Mammary epithelial cell (primary cell): ENCODE measurements at regions of chr1 and their contacts with region 1.

Region 1: DNA sequence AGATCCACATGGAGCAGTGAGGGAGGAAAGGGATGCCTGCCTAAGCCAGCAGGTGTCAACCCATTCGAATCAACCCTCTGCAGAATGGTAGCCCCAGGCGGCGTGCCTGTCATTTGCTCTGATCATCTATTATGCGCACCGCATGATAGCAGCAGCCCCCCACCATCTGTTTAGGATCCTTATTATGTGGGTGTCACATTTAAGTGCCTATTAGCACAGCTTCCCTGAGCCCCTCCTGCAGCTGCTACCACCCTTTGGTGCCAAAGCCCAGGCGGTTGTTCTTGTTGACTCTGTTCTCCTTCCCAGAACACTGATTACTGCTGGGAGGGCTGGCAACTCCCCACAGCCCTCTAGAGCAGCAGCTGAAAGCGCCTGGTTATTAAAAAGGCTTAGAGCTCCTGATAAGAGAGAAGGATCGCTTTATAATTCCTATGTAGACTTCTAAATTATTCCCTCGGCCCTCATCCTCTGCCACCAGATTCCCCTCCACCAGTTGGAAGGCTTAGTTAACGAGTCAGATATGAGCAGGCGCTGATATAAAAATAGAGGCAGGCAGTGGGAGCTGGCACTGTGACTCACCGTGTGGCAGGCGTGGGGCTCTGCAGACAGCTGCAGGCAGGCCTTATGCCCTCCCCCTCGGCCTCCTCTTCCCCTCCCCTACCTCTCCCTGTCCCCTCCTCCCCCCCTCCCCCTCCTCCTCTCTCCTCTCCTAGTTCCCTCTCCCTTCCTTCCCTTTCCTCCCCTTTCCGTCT is 23.0 kb downstream of the ACTA1 start:
- DNase-seq: peak; percentile 43
- H3K4me3 ChIP-seq: no peak overlapping the region
- H3K27ac ChIP-seq: no peak overlapping the region
- H3K4me1 ChIP-seq: peaks cover 14% of the 10 kb centered on the region
- H3K27me3 ChIP-seq: peaks cover 7% of the 10 kb centered on the region
- CTCF ChIP-seq: no peak

Region 2: GRCh38 chr1:228921481-228921880 is 489.4 kb before region 1 on chr1:
- CTCF ChIA-PET with region 1: no interaction called
- dilution Hi-C with region 1: no loop called
- in situ Hi-C with region 1: no loop called
- intact Hi-C with region 1: no loop called
- DNase-seq: no peak
- H3K4me3 ChIP-seq: no peak overlapping the region
- H3K27ac ChIP-seq: no peak overlapping the region
- H3K4me1 ChIP-seq: no peaks in the 10 kb centered on the region
- H3K27me3 ChIP-seq: no peaks in the 10 kb centered on the region
- CTCF ChIP-seq: no peak

Region 3: DNA sequence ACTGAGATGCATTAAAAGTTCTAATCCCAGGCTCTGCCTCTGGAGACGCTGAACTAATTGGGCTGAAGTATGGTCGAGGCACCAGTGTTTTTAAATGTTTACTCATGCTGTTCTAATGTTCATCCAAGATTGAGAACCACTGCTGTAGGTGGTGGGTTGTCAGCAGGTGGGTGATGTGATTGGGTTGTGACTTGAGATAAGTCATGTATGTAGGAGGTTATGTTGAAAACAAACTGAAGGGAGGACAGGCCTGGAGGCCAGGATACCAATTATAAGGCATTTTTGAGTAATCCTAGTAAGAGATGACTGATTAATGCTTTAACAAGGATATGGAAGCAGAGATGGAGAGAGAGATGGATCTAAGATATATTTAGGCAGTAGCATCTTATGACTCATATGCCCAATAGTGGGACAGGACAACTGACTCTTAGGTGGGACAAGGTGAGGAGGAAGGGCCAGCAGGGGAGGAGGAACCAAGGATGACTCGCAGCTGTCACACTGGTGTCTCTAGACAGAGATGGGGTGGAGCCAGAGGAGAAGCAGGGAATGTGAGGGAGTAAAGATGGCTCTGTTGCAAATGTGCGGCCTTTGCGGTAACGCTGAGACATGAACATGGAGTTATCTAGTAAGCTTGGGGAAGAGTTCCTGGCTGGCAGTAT is 110.6 kb before region 1 on chr1:
- CTCF ChIA-PET with region 1: no interaction called
- dilution Hi-C with region 1: loop called (anchors 5 kb)
- in situ Hi-C with region 1: no loop called
- intact Hi-C with region 1: no loop called
- DNase-seq: no peak
- H3K4me3 ChIP-seq: no peak overlapping the region
- H3K27ac ChIP-seq: no peak overlapping the region
- H3K4me1 ChIP-seq: no peaks in the 10 kb centered on the region
- H3K27me3 ChIP-seq: no peaks in the 10 kb centered on the region
- CTCF ChIP-seq: no peak

Region 4: DNA sequence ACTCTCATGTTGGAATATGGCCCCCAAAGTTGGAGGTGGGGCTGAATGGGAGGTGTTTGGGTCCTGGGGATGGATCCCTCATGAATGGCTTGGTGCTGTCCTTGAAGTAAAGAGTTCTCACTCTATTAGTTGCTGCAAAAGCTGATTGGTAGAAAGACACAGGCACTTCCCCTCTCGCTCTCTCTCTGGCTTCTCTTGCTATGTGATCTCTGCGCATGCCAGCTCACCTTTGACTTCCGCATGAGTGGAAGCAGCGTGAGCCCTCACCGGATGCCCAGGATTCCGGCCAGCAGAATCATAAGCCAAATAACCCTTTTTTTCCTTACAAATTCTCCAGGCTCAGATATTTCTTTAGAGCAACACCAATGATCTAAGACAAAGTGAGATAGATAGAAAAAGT is 47.1 kb before region 1 on chr1:
- CTCF ChIA-PET with region 1: no interaction called
- dilution Hi-C with region 1: loop called (anchors 5 kb)
- in situ Hi-C with region 1: no loop called
- intact Hi-C with region 1: no loop called
- DNase-seq: no peak
- H3K4me3 ChIP-seq: no peak overlapping the region
- H3K27ac ChIP-seq: no peak overlapping the region
- H3K4me1 ChIP-seq: no peaks in the 10 kb centered on the region
- H3K27me3 ChIP-seq: no peaks in the 10 kb centered on the region
- CTCF ChIP-seq: no peak

Region 5: GRCh38 chr1:229447809-229448252 is 37.0 kb after region 1 on chr1:
- CTCF ChIA-PET with region 1: no interaction called
- dilution Hi-C with region 1: loop called (anchors 5 kb)
- in situ Hi-C with region 1: no loop called
- intact Hi-C with region 1: no loop called
- DNase-seq: no peak
- H3K4me3 ChIP-seq: no peak overlapping the region
- H3K27ac ChIP-seq: no peak overlapping the region
- H3K4me1 ChIP-seq: no peaks in the 10 kb centered on the region
- H3K27me3 ChIP-seq: no peaks in the 10 kb centered on the region
- CTCF ChIP-seq: no peak

Region 6: GRCh38 chr1:229479660-229480399 is 69.0 kb after region 1 on chr1:
- CTCF ChIA-PET with region 1: no interaction called
- dilution Hi-C with region 1: no loop called
- in situ Hi-C with region 1: no loop called
- intact Hi-C with region 1: no loop called
- DNase-seq: no peak
- H3K4me3 ChIP-seq: no peak overlapping the region
- H3K27ac ChIP-seq: no peak overlapping the region
- H3K4me1 ChIP-seq: no peaks in the 10 kb centered on the region
- H3K27me3 ChIP-seq: no peaks in the 10 kb centered on the region
- CTCF ChIP-seq: no peak